ENCODE measurements at regions of chr1 and their contacts with region 1.

Region 1: DNA sequence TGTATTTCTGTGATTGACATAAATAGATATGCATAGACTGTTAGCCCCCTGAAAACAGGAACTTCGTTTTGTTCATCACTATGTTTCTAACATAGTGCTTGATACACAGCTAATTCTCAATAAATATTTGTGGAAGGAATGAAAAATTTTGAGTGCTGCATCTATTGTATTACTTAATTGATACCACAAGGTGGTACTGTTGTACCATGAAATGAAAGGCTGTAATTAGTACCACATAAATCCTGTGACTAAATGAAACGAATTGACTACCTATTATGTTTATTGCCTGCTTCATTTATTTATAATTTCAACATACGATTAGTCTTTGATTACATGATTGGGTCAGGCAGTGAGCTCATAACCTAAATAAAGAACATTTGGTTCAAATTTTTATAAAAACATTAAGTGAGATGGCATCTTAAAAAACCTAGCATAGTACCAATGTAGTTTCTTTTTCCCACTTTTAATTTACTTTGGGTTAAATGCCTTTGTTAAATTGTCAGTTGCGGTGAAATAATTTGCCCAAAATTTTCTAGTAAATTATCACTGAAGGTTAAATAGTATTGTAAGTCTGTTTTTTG is 15.0 kb upstream of the TGFB2 start:
- DNase-seq: no peak
- H3K4me3 ChIP-seq: no peak overlapping the region
- H3K27ac ChIP-seq: no peak overlapping the region
- H3K4me1 ChIP-seq: no peaks in the 10 kb centered on the region
- H3K27me3 ChIP-seq: no peaks in the 10 kb centered on the region
- CTCF ChIP-seq: peak; percentile 59 to 87

Region 2: GRCh38 chr1:219416594-219417238 is 1086.6 kb after region 1 on chr1:
- intact Hi-C with region 1: loop called (anchors 10 kb)
- DNase-seq: peak in 1 of 2 donors; percentile 54
- H3K4me3 ChIP-seq: no peak overlapping the region
- H3K27ac ChIP-seq: no peak overlapping the region
- H3K4me1 ChIP-seq: no peaks in the 10 kb centered on the region
- H3K27me3 ChIP-seq: no peaks in the 10 kb centered on the region
- CTCF ChIP-seq: peak; percentile 43 to 59

Region 3: GRCh38 chr1:219660666-219661463 is 1330.7 kb after region 1 on chr1:
- intact Hi-C with region 1: loop called (anchors 5 kb)
- DNase-seq: peak; percentile 91 to 92
- H3K4me3 ChIP-seq: peak overlapping the region; percentile 14 to 36
- H3K27ac ChIP-seq: no peak overlapping the region
- H3K4me1 ChIP-seq: peaks cover 0 to 22% (median 7%) of the 10 kb centered on the region in 4 donors
- H3K27me3 ChIP-seq: peaks cover 0 to 3% of the 10 kb centered on the region in 2 donors
- CTCF ChIP-seq: peak; percentile 60 to 75